ENCODE measurements at regions of chr12 and their contacts with region 1.

Region 1: DNA sequence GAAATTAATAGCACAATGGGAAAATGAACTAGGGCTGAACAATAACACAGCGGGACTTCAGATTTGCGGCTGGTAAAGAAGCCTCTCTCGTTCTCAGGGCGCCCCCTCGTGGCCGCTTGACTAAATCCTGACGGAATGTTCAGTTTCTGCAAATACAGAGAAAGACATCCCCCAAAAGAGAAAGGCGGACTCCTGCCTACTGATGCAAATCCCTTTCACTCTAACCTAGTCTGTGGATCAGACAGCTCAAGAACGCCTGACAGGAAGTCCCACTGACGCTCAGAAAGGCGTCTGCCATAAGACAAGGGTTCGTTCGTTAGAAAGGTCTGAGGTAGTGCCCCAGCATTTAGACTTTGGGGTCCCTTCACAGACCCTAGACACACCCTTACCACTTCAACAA is 2.5 kb downstream of the NUAK1 start:
- DNase-seq: peak; percentile 70 to 80
- ATAC-seq: peak; percentile 28 to 32
- H3K4me3 ChIP-seq: peak overlapping the region; percentile 81 to 88 (median 86)
- H3K27ac ChIP-seq: peak overlapping the region; percentile 94 to 99 (median 99)
- H3K4me1 ChIP-seq: peaks cover 44 to 73% of the 10 kb centered on the region in 2 donors
- H3K27me3 ChIP-seq: no peaks in the 10 kb centered on the region
- CTCF ChIP-seq: peak; percentile 87 to 93 (median 87)
- POLR2A ChIP-seq: peak; percentile 26 to 48

Region 2: GRCh38 chr12:105705765-105706164 is 430.5 kb before region 1 on chr12:
- in situ Hi-C with region 1: loop called (anchors 5 to 10 kb)
- intact Hi-C with region 1: loop called (anchors 1 kb)
- DNase-seq: peak in 1 of 2 donors; percentile 41
- ATAC-seq: peak; percentile 53 to 56
- H3K4me3 ChIP-seq: no peak overlapping the region
- H3K27ac ChIP-seq: peak overlapping the region; percentile 73 to 85 (median 76)
- H3K4me1 ChIP-seq: peaks cover 17 to 22% of the 10 kb centered on the region in 2 donors
- H3K27me3 ChIP-seq: no peaks in the 10 kb centered on the region
- CTCF ChIP-seq: peak; percentile 56 to 75 (median 73)
- POLR2A ChIP-seq: no peak

Region 3: GRCh38 chr12:105820429-105821140 is 315.7 kb before region 1 on chr12:
- in situ Hi-C with region 1: loop called in 2 of 4 experiments (anchors 25 kb)
- intact Hi-C with region 1: loop called (anchors 5 kb)
- DNase-seq: peak; percentile 79 to 85
- ATAC-seq: peak; percentile 96 to 99
- H3K4me3 ChIP-seq: no peak overlapping the region
- H3K27ac ChIP-seq: peak overlapping the region; percentile 76 to 85 (median 78)
- H3K4me1 ChIP-seq: peaks cover 23 to 28% of the 10 kb centered on the region in 2 donors
- H3K27me3 ChIP-seq: no peaks in the 10 kb centered on the region
- CTCF ChIP-seq: no peak
- POLR2A ChIP-seq: no peak

Region 4: DNA sequence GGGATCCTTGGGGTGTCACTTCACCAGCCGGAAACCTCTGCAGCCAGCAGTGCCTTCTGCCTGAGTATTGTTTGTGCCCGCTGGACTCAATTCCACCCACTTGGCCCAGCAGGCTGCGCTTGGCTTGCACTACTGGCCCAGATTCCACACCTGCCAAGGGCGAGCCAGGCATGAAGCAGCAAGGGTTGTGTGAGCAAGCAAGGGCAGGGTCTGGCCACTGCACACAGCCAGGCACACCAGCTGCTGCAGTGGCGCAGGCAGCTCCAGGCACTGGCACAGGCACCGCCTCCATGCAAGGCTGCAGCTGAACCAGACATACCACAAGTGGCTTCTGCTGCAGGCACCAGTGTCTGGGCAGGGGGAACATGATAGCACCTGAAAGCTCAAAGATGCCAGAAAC is 97.0 kb before region 1 on chr12:
- in situ Hi-C with region 1: no loop called
- intact Hi-C with region 1: loop called (anchors 5 kb)
- DNase-seq: peak; percentile 48 to 49
- ATAC-seq: peak; percentile 76 to 84
- H3K4me3 ChIP-seq: no peak overlapping the region
- H3K27ac ChIP-seq: no peak overlapping the region
- H3K4me1 ChIP-seq: no peaks in the 10 kb centered on the region
- H3K27me3 ChIP-seq: no peaks in the 10 kb centered on the region
- CTCF ChIP-seq: no peak
- POLR2A ChIP-seq: no peak

Region 5: GRCh38 chr12:106106884-106107283 is 29.4 kb before region 1 on chr12:
- in situ Hi-C with region 1: no loop called
- intact Hi-C with region 1: loop called (anchors 1 kb)
- DNase-seq: peak in 1 of 2 donors; percentile 41
- ATAC-seq: peak; percentile 65 to 77
- H3K4me3 ChIP-seq: no peak overlapping the region
- H3K27ac ChIP-seq: peak overlapping the region; percentile 39 to 65 (median 42)
- H3K4me1 ChIP-seq: peaks cover 61 to 68% of the 10 kb centered on the region in 2 donors
- H3K27me3 ChIP-seq: no peaks in the 10 kb centered on the region
- CTCF ChIP-seq: no peak
- POLR2A ChIP-seq: no peak

Region 6: GRCh38 chr12:106302401-106303201 is 166.3 kb after region 1 on chr12 and contains the start of gene TCP11L2:
- in situ Hi-C with region 1: no loop called
- intact Hi-C with region 1: loop called (anchors 5 kb)
- DNase-seq: peak; percentile 84 to 86
- ATAC-seq: peak; percentile 57 to 61
- H3K4me3 ChIP-seq: peak within 1 kb of the TSS; percentile 73 to 86 (median 78)
- H3K27ac ChIP-seq: peak within 1 kb of the TSS; percentile 91 to 97 (median 94)
- H3K4me1 ChIP-seq: peaks cover 67 to 70% of the 10 kb centered on the region in 2 donors
- H3K27me3 ChIP-seq: no peaks in the 10 kb centered on the region
- CTCF ChIP-seq: peak in 1 of 5 experiments; percentile 12
- POLR2A ChIP-seq: peak; percentile 79 to 92
- total RNA-seq, gene TCP11L2: 39.1 to 51.7 (median 43.9) TPM

Region 7: GRCh38 chr12:106329231-106329982 is 193.1 kb after region 1 on chr12:
- in situ Hi-C with region 1: no loop called
- intact Hi-C with region 1: no loop called
- DNase-seq: peak in 1 of 2 donors; percentile 54
- ATAC-seq: peak; percentile 66 to 85
- H3K4me3 ChIP-seq: peak overlapping the region in 1 of 4 donors; percentile 30
- H3K27ac ChIP-seq: peak overlapping the region; percentile 67 to 79 (median 74)
- H3K4me1 ChIP-seq: peaks cover 43 to 52% of the 10 kb centered on the region in 2 donors
- H3K27me3 ChIP-seq: no peaks in the 10 kb centered on the region
- CTCF ChIP-seq: no peak
- POLR2A ChIP-seq: no peak

Measured in gastrocnemius medialis (tissue), 4 donors.